Activated CD4-positive, alpha-beta memory T cell treated with anti-CD3 and anti-CD28 coated beads for 36 hours (primary cell): ENCODE measurements at regions of chrX and their contacts with region 1.

Region 1: GRCh38 chrX:136588041-136588788 is 56.2 kb downstream of the VGLL1 start:
- DNase-seq: no peak
- H3K4me3 Mint-ChIP-seq: peak overlapping the region; percentile 12
- H3K27ac Mint-ChIP-seq: peak overlapping the region; percentile 74
- H3K4me1 Mint-ChIP-seq: peaks cover 66% of the 10 kb centered on the region
- H3K27me3 Mint-ChIP-seq: no peaks in the 10 kb centered on the region

Region 2: GRCh38 chrX:136209016-136209738 is 379.0 kb before region 1 on chrX:
- CTCF ChIA-PET with region 1: no interaction called
- POLR2A ChIA-PET with region 1: no interaction called
- intact Hi-C with region 1: loop called (anchors 10 kb)
- DNase-seq: peak; percentile 40
- H3K4me3 Mint-ChIP-seq: no peak overlapping the region
- H3K27ac Mint-ChIP-seq: no peak overlapping the region
- H3K4me1 Mint-ChIP-seq: peaks cover 15% of the 10 kb centered on the region
- H3K27me3 Mint-ChIP-seq: no peaks in the 10 kb centered on the region

Region 3: GRCh38 chrX:136564698-136565097 is 23.5 kb before region 1 on chrX:
- CTCF ChIA-PET with region 1: no interaction called
- POLR2A ChIA-PET with region 1: no interaction called
- intact Hi-C with region 1: no loop called
- DNase-seq: no peak
- H3K4me3 Mint-ChIP-seq: no peak overlapping the region
- H3K27ac Mint-ChIP-seq: no peak overlapping the region
- H3K4me1 Mint-ChIP-seq: no peaks in the 10 kb centered on the region
- H3K27me3 Mint-ChIP-seq: no peaks in the 10 kb centered on the region

Region 4: DNA sequence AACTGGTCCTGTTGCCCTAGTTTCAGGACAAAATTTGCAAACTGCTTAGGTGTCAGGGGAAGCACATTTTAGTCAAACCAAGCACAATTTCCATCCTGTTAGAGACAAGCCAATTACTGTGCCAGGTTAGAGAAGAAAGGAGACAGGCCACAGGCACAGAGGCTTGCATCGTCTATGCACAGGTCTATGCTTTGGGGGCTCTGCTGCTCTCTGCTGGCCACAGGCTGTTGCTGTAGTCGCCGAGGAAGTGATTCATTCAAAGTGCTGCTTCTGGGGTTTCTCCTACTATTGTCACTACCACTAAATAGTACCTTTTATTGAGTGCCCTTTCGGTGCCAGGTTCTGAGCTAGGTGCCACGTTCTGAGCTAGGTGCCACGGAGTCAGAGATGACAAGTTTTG is 10.7 kb before region 1 on chrX:
- CTCF ChIA-PET with region 1: interaction called, 7 read pairs
- POLR2A ChIA-PET with region 1: no interaction called
- intact Hi-C with region 1: loop called (anchors 1 kb)
- DNase-seq: peak; percentile 83
- H3K4me3 Mint-ChIP-seq: peak overlapping the region; percentile 50
- H3K27ac Mint-ChIP-seq: peak overlapping the region; percentile 82
- H3K4me1 Mint-ChIP-seq: peaks cover 44% of the 10 kb centered on the region
- H3K27me3 Mint-ChIP-seq: no peaks in the 10 kb centered on the region

Region 5: GRCh38 chrX:136598631-136599030 is 10.4 kb after region 1 on chrX:
- CTCF ChIA-PET with region 1: interaction called, 4 read pairs
- POLR2A ChIA-PET with region 1: interaction called, 10 read pairs
- intact Hi-C with region 1: loop called (anchors 1 kb)
- DNase-seq: peak; percentile 63
- H3K4me3 Mint-ChIP-seq: peak overlapping the region; percentile 54
- H3K27ac Mint-ChIP-seq: peak overlapping the region; percentile 92
- H3K4me1 Mint-ChIP-seq: peaks cover 62% of the 10 kb centered on the region
- H3K27me3 Mint-ChIP-seq: no peaks in the 10 kb centered on the region

Region 6: GRCh38 chrX:136626237-136626636 is 38.0 kb after region 1 on chrX:
- CTCF ChIA-PET with region 1: no interaction called
- POLR2A ChIA-PET with region 1: interaction called, 3 read pairs
- intact Hi-C with region 1: loop called (anchors 5 kb)
- DNase-seq: no peak
- H3K4me3 Mint-ChIP-seq: no peak overlapping the region
- H3K27ac Mint-ChIP-seq: peak overlapping the region; percentile 82
- H3K4me1 Mint-ChIP-seq: peaks cover 89% of the 10 kb centered on the region
- H3K27me3 Mint-ChIP-seq: no peaks in the 10 kb centered on the region

Region 7: DNA sequence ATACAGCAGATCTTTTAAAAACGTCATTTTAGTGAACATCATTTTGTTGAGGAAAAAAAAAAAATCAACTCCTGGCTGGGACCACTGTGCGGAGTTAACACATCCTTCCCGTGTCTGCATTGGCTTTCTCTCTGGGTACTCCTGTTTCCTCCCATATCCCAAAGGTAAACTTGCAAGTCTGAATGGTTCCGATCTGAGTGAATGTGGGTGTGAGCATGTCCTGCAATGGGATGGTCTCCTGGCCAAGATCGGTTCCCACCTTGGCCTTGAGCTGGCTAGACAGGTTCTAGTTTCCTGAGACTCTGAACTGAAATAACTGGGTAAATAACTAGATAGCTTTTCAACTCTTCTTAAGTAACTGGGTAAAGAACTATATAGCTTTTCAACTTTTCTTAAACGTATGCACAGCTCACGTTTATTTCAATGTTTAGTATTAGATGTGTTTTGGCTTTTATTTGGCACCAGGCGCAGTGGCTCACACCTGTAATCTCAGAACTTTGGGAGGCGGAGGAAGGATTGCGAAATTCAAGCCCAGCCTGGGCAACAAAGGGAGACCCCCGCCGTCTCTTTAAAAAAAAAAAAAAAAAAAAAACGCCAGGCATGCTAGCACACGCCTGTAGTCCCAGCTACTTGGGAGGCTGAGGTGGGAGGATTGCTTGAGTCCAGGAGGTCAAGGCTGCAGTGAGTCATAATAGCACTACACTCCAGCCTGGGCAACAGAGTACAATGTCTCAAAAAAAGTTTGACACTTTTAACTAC is 278.3 kb after region 1 on chrX:
- CTCF ChIA-PET with region 1: no interaction called
- POLR2A ChIA-PET with region 1: no interaction called
- intact Hi-C with region 1: loop called (anchors 5 kb)
- DNase-seq: no peak
- H3K4me3 Mint-ChIP-seq: no peak overlapping the region
- H3K27ac Mint-ChIP-seq: peak overlapping the region; percentile 77
- H3K4me1 Mint-ChIP-seq: peaks cover 65% of the 10 kb centered on the region
- H3K27me3 Mint-ChIP-seq: no peaks in the 10 kb centered on the region

Region 8: GRCh38 chrX:137051978-137052642 is 463.9 kb after region 1 on chrX:
- CTCF ChIA-PET with region 1: no interaction called
- POLR2A ChIA-PET with region 1: no interaction called
- intact Hi-C with region 1: loop called (anchors 10 kb)
- DNase-seq: peak; percentile 86
- H3K4me3 Mint-ChIP-seq: peak overlapping the region; percentile 83
- H3K27ac Mint-ChIP-seq: no peak overlapping the region
- H3K4me1 Mint-ChIP-seq: peaks cover 8% of the 10 kb centered on the region
- H3K27me3 Mint-ChIP-seq: peaks cover 12% of the 10 kb centered on the region